Natural killer cell (primary cell): ENCODE measurements at regions of chr19 and their contacts with region 1.

Region 1: GRCh38 chr19:1076951-1077350 is 10.0 kb downstream of the ARHGAP45 start:
- DNase-seq: peak; percentile 80 to 97
- ATAC-seq: peak; percentile 83 to 88 (median 84)
- H3K4me3 ChIP-seq: peak overlapping the region; percentile 5
- H3K4me3 Mint-ChIP-seq: peak overlapping the region; percentile 74
- H3K27ac ChIP-seq: peak overlapping the region; percentile 94
- H3K27ac Mint-ChIP-seq: peak overlapping the region; percentile 93 to 95
- H3K4me1 ChIP-seq: peaks cover 98% of the 10 kb centered on the region
- H3K4me1 Mint-ChIP-seq: peaks cover 26 to 38% of the 10 kb centered on the region in 2 donors
- H3K27me3 ChIP-seq: no peaks in the 10 kb centered on the region
- H3K27me3 Mint-ChIP-seq: no peaks in the 10 kb centered on the region
- CTCF ChIP-seq: no peak

Region 2: DNA sequence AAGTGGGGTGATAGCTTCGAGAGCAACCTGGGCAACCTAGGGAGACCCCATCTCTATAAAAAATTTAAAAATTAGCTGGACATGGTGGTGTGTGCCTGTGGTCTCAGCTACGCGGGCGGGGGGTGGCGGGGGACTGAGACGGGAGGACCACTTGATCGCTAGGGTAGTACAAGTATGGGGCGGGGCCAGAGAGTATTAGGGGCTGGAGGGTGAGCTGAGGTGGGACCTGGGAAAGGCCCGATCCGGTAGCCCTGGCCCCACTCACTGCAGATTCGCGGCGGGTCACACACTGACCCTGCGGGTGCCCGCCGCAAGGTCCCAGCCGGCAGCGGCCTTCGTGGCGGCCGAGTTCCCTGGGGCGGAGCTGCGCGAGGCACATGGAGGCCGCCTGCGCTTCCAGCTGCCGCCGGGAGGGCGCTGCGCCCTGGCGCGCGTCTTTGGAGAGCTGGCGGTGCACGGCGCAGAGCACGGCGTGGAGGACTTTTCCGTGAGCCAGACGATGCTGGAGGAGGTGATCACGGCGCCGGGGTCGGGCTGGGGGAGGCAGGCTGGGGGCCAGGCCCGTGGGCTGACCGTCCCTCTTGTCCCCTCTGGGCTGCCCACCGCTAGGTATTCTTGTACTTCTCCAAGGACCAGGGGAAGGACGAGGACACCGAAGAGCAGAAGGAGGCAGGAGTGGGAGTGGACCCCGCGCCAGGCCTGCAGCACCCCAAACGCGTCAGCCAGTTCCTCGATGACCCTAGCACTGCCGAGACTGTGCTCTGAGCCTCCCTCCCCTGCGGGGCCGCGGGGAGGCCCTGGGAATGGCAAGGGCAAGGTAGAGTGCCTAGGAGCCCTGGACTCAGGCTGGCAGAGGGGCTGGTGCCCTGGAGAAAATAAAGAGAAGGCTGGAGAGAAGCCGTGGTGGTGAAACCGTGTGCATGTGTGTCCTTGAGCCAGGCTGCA is 12.0 kb before region 1 on chr19:
- intact Hi-C with region 1: loop called (anchors 1 kb)
- DNase-seq: peak; percentile 68 to 90
- ATAC-seq: peak; percentile 25 to 52 (median 34)
- H3K4me3 ChIP-seq: no peak overlapping the region
- H3K4me3 Mint-ChIP-seq: peak overlapping the region; percentile 76
- H3K27ac ChIP-seq: no peak overlapping the region
- H3K27ac Mint-ChIP-seq: peak overlapping the region; percentile 81 to 93
- H3K4me1 ChIP-seq: peaks cover 55% of the 10 kb centered on the region
- H3K4me1 Mint-ChIP-seq: peaks cover 19 to 47% of the 10 kb centered on the region in 2 donors
- H3K27me3 ChIP-seq: no peaks in the 10 kb centered on the region
- H3K27me3 Mint-ChIP-seq: no peaks in the 10 kb centered on the region
- CTCF ChIP-seq: peak; percentile 78

Region 3: GRCh38 chr19:1087813-1088415 is 11.0 kb after region 1 on chr19:
- intact Hi-C with region 1: loop called (anchors 1 kb)
- DNase-seq: peak in 1 of 2 donors; percentile 78
- ATAC-seq: peak; percentile 34 to 62 (median 52)
- H3K4me3 ChIP-seq: no peak overlapping the region
- H3K4me3 Mint-ChIP-seq: peak overlapping the region; percentile 49
- H3K27ac ChIP-seq: peak overlapping the region; percentile 70
- H3K27ac Mint-ChIP-seq: peak overlapping the region; percentile 78 to 87
- H3K4me1 ChIP-seq: peaks cover 45% of the 10 kb centered on the region
- H3K4me1 Mint-ChIP-seq: peaks cover 19 to 30% of the 10 kb centered on the region in 2 donors
- H3K27me3 ChIP-seq: no peaks in the 10 kb centered on the region
- H3K27me3 Mint-ChIP-seq: no peaks in the 10 kb centered on the region
- CTCF ChIP-seq: no peak

Region 4: DNA sequence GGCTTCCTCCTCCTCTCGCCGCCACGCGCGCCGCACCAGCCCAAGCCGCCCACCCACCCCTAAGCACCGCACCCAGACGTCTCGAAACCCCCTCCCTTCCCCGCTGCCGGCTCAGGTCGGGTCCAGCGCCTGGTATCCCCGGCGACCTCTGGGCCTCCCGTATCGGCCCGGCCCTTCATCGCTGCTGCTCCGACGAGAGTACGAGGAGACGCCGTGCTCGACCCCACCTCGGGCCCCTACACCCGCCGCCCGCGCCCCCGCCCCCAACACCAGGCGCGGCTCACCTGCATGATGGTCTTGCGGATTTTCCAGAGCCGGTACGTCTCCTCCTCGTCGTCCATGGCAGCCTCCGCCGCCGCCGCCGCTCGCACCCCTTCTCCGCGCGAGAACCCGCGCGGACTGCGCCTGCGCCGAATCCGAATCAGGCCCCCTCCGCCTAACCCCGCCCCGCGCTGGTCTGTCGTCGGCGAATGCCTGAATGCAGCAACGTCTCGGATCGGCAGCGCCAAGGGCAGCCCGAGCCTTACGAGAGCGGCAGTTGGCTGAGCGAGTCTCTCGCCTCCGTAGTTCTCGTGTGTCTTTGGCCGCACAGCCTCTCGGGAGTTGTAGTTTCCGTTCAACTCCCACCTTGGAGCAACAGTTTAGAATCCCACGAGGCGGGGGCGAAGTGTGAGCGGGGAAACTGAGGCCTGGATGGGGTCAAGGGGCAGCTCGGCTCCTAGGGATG is 18.2 kb after region 1 on chr19 and contains the start of gene POLR2E:
- intact Hi-C with region 1: loop called (anchors 2 kb)
- DNase-seq: peak; percentile 98 to 99
- ATAC-seq: peak; percentile 98 to 100 (median 99)
- H3K4me3 ChIP-seq: peak within 1 kb of the TSS; percentile 94
- H3K4me3 Mint-ChIP-seq: peak within 1 kb of the TSS; percentile 93
- H3K27ac ChIP-seq: peak within 1 kb of the TSS; percentile 56
- H3K27ac Mint-ChIP-seq: peak within 1 kb of the TSS; percentile 64 to 93
- H3K4me1 ChIP-seq: peaks cover 33% of the 10 kb centered on the region
- H3K4me1 Mint-ChIP-seq: peaks cover 8 to 41% of the 10 kb centered on the region in 2 donors
- H3K27me3 ChIP-seq: no peaks in the 10 kb centered on the region
- H3K27me3 Mint-ChIP-seq: no peaks in the 10 kb centered on the region
- CTCF ChIP-seq: no peak
- total RNA-seq, gene POLR2E: 77.3 to 105 (median 91.6) TPM